ENCODE measurements at regions of chr17 and their contacts with region 1.

Region 1: DNA sequence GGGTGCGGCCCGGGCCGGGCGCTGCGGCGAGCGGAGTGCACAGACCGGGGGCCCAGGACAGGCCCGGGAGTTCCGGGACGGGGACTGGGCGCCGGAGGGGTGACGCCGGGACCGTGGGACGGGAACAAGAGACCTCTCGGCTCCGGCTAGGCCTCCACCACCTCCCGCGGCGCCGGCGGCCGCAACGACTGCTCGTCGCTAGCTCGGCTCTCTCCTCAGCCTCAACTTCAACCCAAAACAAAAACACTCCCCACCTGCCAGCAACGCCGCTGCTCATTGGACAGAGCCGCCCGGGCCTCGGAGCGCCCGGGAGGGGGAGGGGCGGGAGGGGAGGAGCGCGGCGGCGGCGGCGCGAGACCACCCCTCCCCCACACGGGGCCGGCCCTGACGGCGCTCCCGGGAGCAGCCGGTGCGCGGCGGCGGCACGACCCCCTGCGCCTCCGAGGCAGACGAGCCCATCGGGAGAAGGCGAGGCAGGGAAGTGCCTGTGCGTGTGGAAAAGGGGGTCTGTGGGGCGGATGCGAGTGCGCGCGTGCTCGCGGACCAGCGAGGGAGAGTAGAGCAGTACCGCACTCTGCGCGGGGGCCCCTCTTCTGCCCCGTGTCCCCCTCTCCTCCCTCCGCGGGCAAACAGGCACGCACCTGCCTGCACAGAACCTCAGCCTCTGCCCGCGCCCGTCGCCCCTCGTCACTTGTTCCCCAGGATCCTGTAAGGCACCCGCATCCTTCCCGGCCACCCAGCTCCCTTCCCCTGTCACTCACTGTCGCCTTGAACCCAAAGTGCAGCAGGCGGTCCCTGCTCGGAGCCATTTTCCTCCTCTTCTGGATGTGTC is at the start of gene FBXL20:
- DNase-seq: peak; percentile 94 to 95
- ATAC-seq: peak; percentile 91 to 93
- H3K4me3 ChIP-seq: peak within 1 kb of the TSS; percentile 76 to 99 (median 96)
- H3K27ac ChIP-seq: peak within 1 kb of the TSS; percentile 94 to 99 (median 98)
- H3K4me1 ChIP-seq: peaks cover 21 to 22% of the 10 kb centered on the region in 2 donors
- H3K27me3 ChIP-seq: no peaks in the 10 kb centered on the region
- CTCF ChIP-seq: peak in 1 of 5 experiments; percentile 1
- POLR2A ChIP-seq: peak; percentile 91 to 99
- total RNA-seq, gene FBXL20: 10.4 to 15.4 (median 13.1) TPM

Region 2: GRCh38 chr17:39270923-39271322 is 130.7 kb before region 1 on chr17:
- in situ Hi-C with region 1: loop called in 1 of 4 experiments (anchors 10 kb)
- intact Hi-C with region 1: loop called (anchors 5 kb)
- DNase-seq: no peak
- ATAC-seq: no peak
- H3K4me3 ChIP-seq: no peak overlapping the region
- H3K27ac ChIP-seq: no peak overlapping the region
- H3K4me1 ChIP-seq: no peaks in the 10 kb centered on the region
- H3K27me3 ChIP-seq: no peaks in the 10 kb centered on the region
- CTCF ChIP-seq: peak in 1 of 5 experiments; percentile 34
- POLR2A ChIP-seq: no peak

Region 3: DNA sequence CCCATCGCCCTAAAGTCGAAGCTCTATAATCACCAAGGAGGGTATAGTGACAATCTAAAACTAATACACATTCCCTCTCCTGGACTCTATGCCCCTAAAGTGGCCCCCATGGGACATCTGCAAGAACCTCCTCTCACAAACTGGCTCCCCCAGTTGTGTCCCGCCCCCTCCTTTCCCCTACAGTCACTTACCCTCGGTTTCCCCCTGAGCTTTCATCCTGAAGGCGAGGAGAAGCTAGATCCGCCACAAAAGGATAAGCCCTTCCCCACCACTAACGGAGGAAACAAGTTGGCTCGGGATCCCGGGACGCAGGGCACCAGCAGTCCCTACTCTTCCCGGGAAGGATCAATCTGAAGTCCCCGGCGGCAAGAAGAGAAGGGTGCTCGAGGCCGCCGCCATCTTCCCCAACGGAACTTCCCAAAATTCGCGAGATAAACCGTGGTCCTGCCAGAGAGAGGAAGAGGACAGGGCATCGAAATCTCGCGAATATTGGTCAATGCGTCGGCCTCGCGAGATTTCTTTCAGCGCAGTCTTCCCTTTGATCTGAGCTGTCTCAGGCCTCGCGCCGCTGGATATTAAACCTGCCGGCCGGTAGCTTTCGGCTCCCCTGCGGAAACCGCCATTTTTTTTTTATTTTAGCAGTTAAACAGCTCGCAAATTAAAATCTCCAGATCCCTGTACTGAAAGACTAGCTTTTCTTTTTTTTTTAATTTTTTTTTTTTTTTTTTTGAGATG is 49.4 kb after region 1 on chr17 and contains the start of gene MED1:
- in situ Hi-C with region 1: no loop called
- intact Hi-C with region 1: loop called (anchors 2 kb)
- DNase-seq: peak; percentile 90 to 95
- ATAC-seq: peak; percentile 99
- H3K4me3 ChIP-seq: peak within 1 kb of the TSS; percentile 78 to 99 (median 95)
- H3K27ac ChIP-seq: peak within 1 kb of the TSS; percentile 88 to 97 (median 91)
- H3K4me1 ChIP-seq: peaks cover 6 to 7% of the 10 kb centered on the region in 2 donors
- H3K27me3 ChIP-seq: no peaks in the 10 kb centered on the region
- CTCF ChIP-seq: no peak
- POLR2A ChIP-seq: peak; percentile 51 to 69
- total RNA-seq, gene MED1: 16.3 to 25.1 (median 17.8) TPM